ENCODE measurements at regions of chr3 and their contacts with region 1.

Region 1: GRCh38 chr3:59908280-59908679 is 858.5 kb upstream of the CFAP20DC start:
- DNase-seq: no peak
- ATAC-seq: no peak
- H3K4me3 ChIP-seq: no peak overlapping the region
- H3K27ac ChIP-seq: no peak overlapping the region
- H3K4me1 ChIP-seq: no peaks in the 10 kb centered on the region
- H3K27me3 ChIP-seq: no peaks in the 10 kb centered on the region

Region 2: DNA sequence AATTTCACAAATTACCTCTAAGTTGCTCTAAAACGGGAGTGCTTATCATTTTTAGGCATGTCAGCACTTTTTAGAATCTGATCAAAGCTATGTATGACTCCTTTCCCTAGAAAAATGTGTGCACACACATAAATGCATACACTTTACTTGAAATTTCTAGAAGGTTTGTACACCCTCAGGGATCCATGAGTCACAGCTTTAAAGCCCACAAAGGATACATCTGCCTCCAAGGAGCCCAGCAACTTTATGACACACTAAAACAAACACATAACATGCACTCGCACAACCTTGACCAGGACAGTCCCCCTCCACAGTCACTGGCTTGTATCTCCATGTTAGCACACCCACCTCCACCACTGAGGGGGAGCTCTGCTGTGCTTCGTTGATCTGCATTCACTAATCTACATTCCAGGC is 136.5 kb before region 1 on chr3:
- intact Hi-C with region 1: no loop called
- DNase-seq: no peak
- ATAC-seq: no peak
- H3K4me3 ChIP-seq: no peak overlapping the region
- H3K27ac ChIP-seq: no peak overlapping the region
- H3K4me1 ChIP-seq: no peaks in the 10 kb centered on the region
- H3K27me3 ChIP-seq: no peaks in the 10 kb centered on the region

Region 3: GRCh38 chr3:59946401-59946800 is 38.1 kb after region 1 on chr3:
- intact Hi-C with region 1: loop called in 1 of 4 experiments (anchors 2 kb)
- DNase-seq: no peak
- ATAC-seq: no peak
- H3K4me3 ChIP-seq: no peak overlapping the region
- H3K27ac ChIP-seq: no peak overlapping the region
- H3K4me1 ChIP-seq: no peaks in the 10 kb centered on the region
- H3K27me3 ChIP-seq: no peaks in the 10 kb centered on the region

Region 4: GRCh38 chr3:59998058-59998457 is 89.8 kb after region 1 on chr3:
- intact Hi-C with region 1: no loop called
- DNase-seq: no peak
- ATAC-seq: no peak
- H3K4me3 ChIP-seq: no peak overlapping the region
- H3K27ac ChIP-seq: no peak overlapping the region
- H3K4me1 ChIP-seq: no peaks in the 10 kb centered on the region
- H3K27me3 ChIP-seq: no peaks in the 10 kb centered on the region